AG04449 (cell line): ENCODE measurements at regions of chr14 and their contacts with region 1.

Region 1: GRCh38 chr14:69346710-69347109 is 51.4 kb downstream of the ERH start:
- DNase-seq: no peak
- H3K4me3 ChIP-seq: no peak overlapping the region
- CTCF ChIP-seq: peak; percentile 93

Region 2: DNA sequence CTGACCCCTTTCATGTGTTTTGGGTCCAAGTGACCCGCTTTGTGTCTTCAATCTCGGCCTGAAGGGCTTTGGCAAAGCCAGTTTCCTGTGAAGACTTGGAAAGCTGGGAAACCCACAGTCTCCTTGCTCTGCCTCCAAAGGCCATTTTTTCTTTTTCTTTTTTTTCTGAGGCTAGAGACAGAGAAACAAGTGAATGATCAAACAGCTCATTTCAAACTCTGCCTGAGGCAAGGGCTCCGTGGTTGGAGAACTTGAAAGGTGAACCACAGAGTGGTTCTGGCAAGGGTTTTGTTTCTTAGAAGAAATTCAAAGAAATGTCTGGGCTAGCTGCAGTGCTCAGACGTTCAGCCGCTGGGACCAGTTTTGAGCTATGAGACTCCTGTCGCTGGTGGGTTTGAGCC is 11.3 kb before region 1 on chr14:
- CTCF ChIA-PET with region 1: interaction called, 40 read pairs
- POLR2A ChIA-PET with region 1: no interaction called
- DNase-seq: no peak
- H3K4me3 ChIP-seq: no peak overlapping the region
- CTCF ChIP-seq: no peak

Region 3: GRCh38 chr14:69363055-69363454 is 16.3 kb after region 1 on chr14:
- CTCF ChIA-PET with region 1: interaction called, 37 read pairs
- POLR2A ChIA-PET with region 1: no interaction called
- DNase-seq: no peak
- H3K4me3 ChIP-seq: no peak overlapping the region
- CTCF ChIP-seq: peak; percentile 84

Region 4: DNA sequence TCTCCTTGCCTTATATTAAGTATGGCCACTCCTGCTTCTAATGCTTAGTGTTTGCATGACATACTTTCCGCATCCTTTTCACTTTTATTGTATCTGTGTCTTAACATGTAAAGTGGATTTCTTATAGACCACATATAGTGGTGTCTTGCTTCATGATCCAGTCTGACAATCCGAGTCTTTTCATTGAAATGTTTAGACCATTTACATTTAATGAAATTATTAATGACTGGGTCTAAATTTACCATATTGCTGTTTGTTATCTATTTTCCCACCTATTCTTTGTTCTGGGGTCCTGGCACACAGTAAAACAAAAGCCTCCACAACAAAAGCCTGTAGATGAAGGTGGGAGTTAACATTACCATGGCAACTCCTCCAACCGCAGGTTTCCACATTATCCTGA is 28.5 kb after region 1 on chr14:
- CTCF ChIA-PET with region 1: no interaction called
- POLR2A ChIA-PET with region 1: no interaction called
- DNase-seq: no peak
- H3K4me3 ChIP-seq: no peak overlapping the region
- CTCF ChIP-seq: no peak

Region 5: DNA sequence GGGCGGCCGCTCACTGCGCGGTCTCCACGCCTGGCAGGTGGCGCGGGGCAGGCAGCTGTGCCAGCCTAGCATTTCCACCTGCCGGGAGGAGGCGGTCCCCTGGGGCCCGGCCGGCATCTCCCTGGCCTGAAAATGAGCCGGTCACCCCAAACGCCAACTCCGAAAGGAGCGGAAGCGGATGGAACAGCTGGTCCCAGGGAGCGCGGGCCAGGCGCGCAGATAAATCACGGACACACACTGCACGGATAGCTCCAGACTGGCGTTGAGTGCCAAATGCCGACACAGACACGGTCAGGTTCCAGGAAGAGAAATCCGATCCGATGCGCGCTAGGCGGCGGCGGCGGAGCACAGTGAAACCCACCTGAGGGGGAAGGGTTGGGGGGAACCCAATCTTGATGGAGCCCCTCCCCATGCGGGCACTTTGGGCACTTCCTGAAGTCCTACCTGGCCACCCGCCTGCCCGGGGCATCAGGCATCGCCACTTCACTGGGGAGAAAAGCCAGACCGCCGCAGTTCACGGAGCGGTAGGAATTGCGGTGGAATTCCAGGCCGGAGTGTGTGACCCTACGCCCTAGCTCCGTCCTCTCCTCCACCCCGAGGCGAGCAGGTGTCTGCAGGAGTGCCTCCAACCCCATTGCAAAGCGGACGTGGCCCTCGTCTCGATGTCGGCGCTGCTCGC is 137.2 kb after region 1 on chr14:
- CTCF ChIA-PET with region 1: no interaction called
- POLR2A ChIA-PET with region 1: no interaction called
- DNase-seq: no peak
- H3K4me3 ChIP-seq: no peak overlapping the region
- CTCF ChIP-seq: no peak